ENCODE measurements at regions of chr1 and their contacts with region 1.

Region 1: DNA sequence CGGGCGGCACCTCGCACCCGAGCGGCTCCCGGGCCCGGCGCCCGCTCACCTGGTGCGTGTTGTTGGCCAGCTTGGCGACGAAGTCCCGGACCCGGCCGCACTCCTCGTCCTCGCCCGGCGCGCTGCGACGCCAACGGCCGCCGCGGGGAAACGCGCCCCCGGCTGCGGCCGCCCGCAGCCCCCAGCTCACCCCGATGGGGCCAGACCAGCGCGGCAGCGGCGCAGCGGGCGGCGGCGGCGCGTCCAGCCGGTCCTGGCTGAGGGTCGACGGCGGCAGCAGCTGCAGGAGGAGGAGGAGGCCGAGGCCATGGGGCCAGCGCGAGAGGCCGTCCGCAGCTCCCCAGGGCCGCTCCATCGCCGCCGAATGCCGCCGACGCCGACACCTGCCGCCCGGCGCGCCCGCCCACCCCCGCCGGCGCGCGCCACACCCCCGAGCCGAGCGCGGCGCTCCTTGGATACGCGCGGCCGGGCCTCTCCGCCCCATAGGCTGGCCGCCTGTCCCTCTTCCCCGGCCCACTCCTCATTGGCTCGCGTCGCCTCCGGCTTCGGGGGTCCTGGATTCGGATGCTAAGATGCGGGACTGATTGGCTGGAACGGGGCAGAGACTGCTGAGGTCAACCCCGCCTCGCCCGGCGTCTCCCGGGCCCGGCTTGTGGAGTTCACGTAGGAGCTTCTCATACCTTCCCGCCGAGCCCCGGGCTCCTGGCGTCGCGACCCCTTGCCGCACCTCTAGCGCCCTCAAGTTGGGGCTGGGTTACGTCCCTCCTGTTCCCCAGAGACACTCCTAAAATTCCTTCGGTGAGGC is at the start of gene SORT1:
- DNase-seq: peak; percentile 88 to 90
- ATAC-seq: peak; percentile 93 to 96 (median 94)
- H3K4me3 ChIP-seq: peak within 1 kb of the TSS; percentile 29 to 80 (median 64)
- H3K27ac ChIP-seq: peak within 1 kb of the TSS; percentile 53 to 96 (median 89)
- H3K4me1 ChIP-seq: peaks cover 7 to 73% (median 54%) of the 10 kb centered on the region in 9 donors
- H3K27me3 ChIP-seq: peaks cover 0 to 11% (median 0%) of the 10 kb centered on the region in 7 donors
- CTCF ChIP-seq: peak in 1 of 9 donors; percentile 18
- total RNA-seq, gene SORT1: 105 to 235 (median 132) TPM

Region 2: GRCh38 chr1:109263597-109264398 is 133.9 kb before region 1 on chr1:
- intact Hi-C with region 1: loop called in 5 of 10 experiments (anchors 1 to 5 kb)
- DNase-seq: peak; percentile 73 to 85
- ATAC-seq: peak; percentile 80 to 90 (median 82)
- H3K4me3 ChIP-seq: no peak overlapping the region
- H3K27ac ChIP-seq: no peak overlapping the region
- H3K4me1 ChIP-seq: peaks cover 0 to 11% (median 0%) of the 10 kb centered on the region in 9 donors
- H3K27me3 ChIP-seq: no peaks in the 10 kb centered on the region
- CTCF ChIP-seq: peak; percentile 88 to 96 (median 93)

Region 3: GRCh38 chr1:109282952-109283747 is 114.6 kb before region 1 on chr1 and contains the start of gene PSRC1:
- intact Hi-C with region 1: loop called in 8 of 10 experiments (anchors 1 to 5 kb)
- DNase-seq: peak; percentile 95 to 96
- ATAC-seq: peak; percentile 99 to 100 (median 99)
- H3K4me3 ChIP-seq: peak within 1 kb of the TSS; percentile 46 to 83 (median 72)
- H3K27ac ChIP-seq: peak within 1 kb of the TSS; percentile 68 to 92 (median 84)
- H3K4me1 ChIP-seq: peaks cover 4 to 31% (median 10%) of the 10 kb centered on the region in 9 donors
- H3K27me3 ChIP-seq: peaks cover 0 to 2% (median 0%) of the 10 kb centered on the region in 7 donors
- CTCF ChIP-seq: peak in 7 of 9 donors; percentile 34 to 76 (median 51)
- total RNA-seq, gene PSRC1: 0.34 to 2.4 (median 0.59) TPM

Region 4: GRCh38 chr1:109350655-109351054 is 47.1 kb before region 1 on chr1:
- intact Hi-C with region 1: loop called in 5 of 10 experiments (anchors 5 to 10 kb)
- DNase-seq: no peak
- ATAC-seq: no peak
- H3K4me3 ChIP-seq: no peak overlapping the region
- H3K27ac ChIP-seq: no peak overlapping the region
- H3K4me1 ChIP-seq: peaks cover 0 to 17% (median 0%) of the 10 kb centered on the region in 9 donors
- H3K27me3 ChIP-seq: no peaks in the 10 kb centered on the region
- CTCF ChIP-seq: no peak

Region 5: GRCh38 chr1:109579491-109579890 is 181.8 kb after region 1 on chr1:
- intact Hi-C with region 1: no loop called
- DNase-seq: peak in 1 of 2 donors; percentile 19
- ATAC-seq: peak in 6 of 8 donors; percentile 48 to 86 (median 74)
- H3K4me3 ChIP-seq: no peak overlapping the region
- H3K27ac ChIP-seq: no peak overlapping the region
- H3K4me1 ChIP-seq: peaks cover 0 to 23% (median 11%) of the 10 kb centered on the region in 9 donors
- H3K27me3 ChIP-seq: no peaks in the 10 kb centered on the region
- CTCF ChIP-seq: no peak

Region 6: GRCh38 chr1:109630081-109630897 is 232.5 kb after region 1 on chr1:
- intact Hi-C with region 1: no loop called
- DNase-seq: no peak
- ATAC-seq: peak in 1 of 8 donors; percentile 11
- H3K4me3 ChIP-seq: no peak overlapping the region
- H3K27ac ChIP-seq: no peak overlapping the region
- H3K4me1 ChIP-seq: peaks cover 0 to 16% (median 0%) of the 10 kb centered on the region in 9 donors
- H3K27me3 ChIP-seq: no peaks in the 10 kb centered on the region
- CTCF ChIP-seq: peak; percentile 14 to 50 (median 36)

Region 7: GRCh38 chr1:110019770-110020169 is 622.0 kb after region 1 on chr1:
- intact Hi-C with region 1: no loop called
- DNase-seq: no peak
- ATAC-seq: no peak
- H3K4me3 ChIP-seq: no peak overlapping the region
- H3K27ac ChIP-seq: no peak overlapping the region
- H3K4me1 ChIP-seq: no peaks in the 10 kb centered on the region
- H3K27me3 ChIP-seq: no peaks in the 10 kb centered on the region
- CTCF ChIP-seq: no peak